AG04449 (cell line): ENCODE measurements at regions of chr3 and their contacts with region 1.

Region 1: GRCh38 chr3:58167431-58168351 is 43.1 kb downstream of the DNASE1L3 start:
- DNase-seq: no peak
- H3K4me3 ChIP-seq: no peak overlapping the region
- CTCF ChIP-seq: peak; percentile 90

Region 2: GRCh38 chr3:57411715-57412114 is 756.0 kb before region 1 on chr3:
- CTCF ChIA-PET with region 1: no interaction called
- POLR2A ChIA-PET with region 1: no interaction called
- DNase-seq: no peak
- H3K4me3 ChIP-seq: no peak overlapping the region
- CTCF ChIP-seq: no peak

Region 3: DNA sequence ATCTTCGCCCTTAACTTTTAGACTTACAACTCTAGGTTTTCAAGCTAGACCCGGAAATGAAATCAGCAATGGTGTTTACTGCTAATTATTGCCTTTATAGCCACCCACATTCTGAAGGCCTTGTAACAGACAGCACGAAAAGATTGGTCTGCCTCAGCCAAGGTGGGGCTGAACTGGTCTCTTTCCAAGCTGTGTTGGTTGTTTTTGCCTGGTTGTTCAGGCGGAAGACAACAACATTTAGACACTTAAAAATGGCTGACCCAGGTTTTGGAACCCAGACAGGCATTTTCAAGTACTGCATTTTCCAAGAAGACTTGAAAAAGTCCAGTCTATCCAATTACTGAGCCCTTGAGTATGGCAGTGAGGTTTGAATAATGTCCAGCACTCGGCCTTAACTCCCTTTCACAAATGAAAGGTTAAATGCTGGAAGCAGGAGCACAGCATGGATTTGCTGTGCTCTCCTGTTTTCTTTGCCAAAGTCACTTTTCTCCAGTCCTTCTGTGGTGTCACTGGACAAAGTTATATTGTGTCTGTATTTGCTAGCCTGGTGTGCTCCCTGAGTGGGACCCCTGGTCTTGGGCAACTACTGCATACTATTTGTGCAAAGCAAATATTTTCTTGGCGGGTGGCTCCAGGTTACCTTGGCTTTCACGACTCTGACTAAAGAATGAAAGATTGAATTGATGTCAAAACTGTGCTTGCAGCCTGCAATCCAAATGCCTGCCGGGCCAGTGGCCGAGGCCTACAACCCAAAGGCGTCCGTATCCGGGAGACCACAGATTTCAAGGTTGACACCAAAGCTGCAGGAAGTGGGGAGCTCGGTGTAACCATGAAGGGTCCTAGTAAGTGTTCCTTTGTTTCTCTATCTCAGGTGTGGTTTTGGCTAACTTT is 65.9 kb before region 1 on chr3:
- CTCF ChIA-PET with region 1: interaction called, 10 read pairs
- POLR2A ChIA-PET with region 1: no interaction called
- DNase-seq: no peak
- H3K4me3 ChIP-seq: no peak overlapping the region
- CTCF ChIP-seq: no peak

Region 4: GRCh38 chr3:58151637-58152036 is 16.1 kb before region 1 on chr3:
- CTCF ChIA-PET with region 1: interaction called, 32 read pairs
- POLR2A ChIA-PET with region 1: no interaction called
- DNase-seq: no peak
- H3K4me3 ChIP-seq: no peak overlapping the region
- CTCF ChIP-seq: no peak